Adrenal gland (tissue), 19 donors: ENCODE measurements at regions of chr7 and their contacts with region 1.

Region 1: DNA sequence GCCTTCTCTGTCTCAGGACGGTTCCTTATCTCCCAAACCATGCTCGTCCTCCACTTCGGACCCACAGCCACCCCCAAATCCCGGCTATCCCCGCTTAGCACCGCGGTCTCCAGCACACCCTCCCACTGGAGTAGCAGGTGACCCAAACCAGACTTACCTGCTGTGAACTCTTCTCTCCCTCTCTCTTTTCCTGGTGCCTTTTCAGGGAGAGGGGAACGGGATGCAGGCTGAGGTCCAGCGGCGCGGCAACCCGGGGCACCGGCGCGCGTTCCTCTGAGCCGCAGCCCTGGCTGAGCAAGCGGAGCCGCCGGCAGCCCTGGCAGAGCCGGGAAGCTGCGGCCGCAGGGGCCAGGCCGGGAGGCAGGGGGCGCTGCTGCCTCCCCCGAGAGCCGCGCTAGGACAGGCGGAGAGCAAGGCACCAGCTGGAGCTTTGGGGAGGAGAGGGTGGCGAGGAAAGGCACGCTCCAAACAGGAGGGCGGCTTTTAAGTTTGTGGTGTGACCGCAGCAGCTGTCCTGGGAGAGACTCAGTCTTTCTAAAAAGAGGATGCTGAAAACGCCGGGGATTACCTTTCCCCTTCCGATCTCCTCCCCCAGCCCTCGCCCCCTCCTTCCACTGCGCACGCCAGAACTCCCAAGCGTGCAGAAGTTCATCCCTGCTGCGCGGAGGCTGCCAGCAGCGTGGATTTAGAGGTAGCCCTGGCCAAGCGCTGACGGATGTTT is at the start of gene SEMA3D:
- DNase-seq: peak; percentile 58 to 76 (median 73)
- H3K4me3 ChIP-seq: peak within 1 kb of the TSS in 1 of 4 donors; percentile 56
- H3K27ac ChIP-seq: peak within 1 kb of the TSS in 4 of 5 donors; percentile 27 to 82 (median 54)
- H3K4me1 ChIP-seq: no peaks in the 10 kb centered on the region
- H3K27me3 ChIP-seq: peaks cover 11% of the 10 kb centered on the region
- CTCF ChIP-seq: peak; percentile 36 to 73 (median 61)
- POLR2A ChIP-seq: peak in 1 of 2 donors; percentile 1
- total RNA-seq, gene SEMA3D: 4.1 to 9.3 (median 7.1) TPM

Region 2: GRCh38 chr7:85554236-85555178 is 367.8 kb after region 1 on chr7:
- intact Hi-C with region 1: loop called in 1 of 2 experiments (anchors 10 kb)
- DNase-seq: peak in 6 of 7 donors; percentile 14 to 46 (median 33)
- H3K4me3 ChIP-seq: no peak overlapping the region
- H3K27ac ChIP-seq: peak overlapping the region in 4 of 5 donors; percentile 11 to 61 (median 38)
- H3K4me1 ChIP-seq: peaks cover 5 to 12% of the 10 kb centered on the region in 2 donors
- H3K27me3 ChIP-seq: no peaks in the 10 kb centered on the region
- CTCF ChIP-seq: peak; percentile 67 to 84 (median 78)
- POLR2A ChIP-seq: no peak